Gastrocnemius medialis (tissue), 4 donors: ENCODE measurements at regions of chr2 and their contacts with region 1.

Region 1: GRCh38 chr2:24721470-24721869 is 71.7 kb downstream of the PTRHD1 start:
- DNase-seq: peak; percentile 79 to 84
- ATAC-seq: peak; percentile 94 to 95
- H3K4me3 ChIP-seq: no peak overlapping the region
- H3K27ac ChIP-seq: peak overlapping the region; percentile 64 to 79 (median 75)
- H3K4me1 ChIP-seq: peaks cover 36 to 56% of the 10 kb centered on the region in 2 donors
- H3K27me3 ChIP-seq: no peaks in the 10 kb centered on the region
- CTCF ChIP-seq: no peak
- POLR2A ChIP-seq: no peak

Region 2: GRCh38 chr2:24658531-24659202 is 62.8 kb before region 1 on chr2:
- in situ Hi-C with region 1: no loop called
- intact Hi-C with region 1: loop called (anchors 2 kb)
- DNase-seq: peak; percentile 86 to 89
- ATAC-seq: peak; percentile 94 to 96
- H3K4me3 ChIP-seq: peak overlapping the region in 3 of 4 donors; percentile 7 to 24 (median 13)
- H3K27ac ChIP-seq: peak overlapping the region; percentile 85 to 89 (median 87)
- H3K4me1 ChIP-seq: peaks cover 31 to 60% of the 10 kb centered on the region in 2 donors
- H3K27me3 ChIP-seq: no peaks in the 10 kb centered on the region
- CTCF ChIP-seq: no peak
- POLR2A ChIP-seq: peak in 1 of 2 donors; percentile 9

Region 3: DNA sequence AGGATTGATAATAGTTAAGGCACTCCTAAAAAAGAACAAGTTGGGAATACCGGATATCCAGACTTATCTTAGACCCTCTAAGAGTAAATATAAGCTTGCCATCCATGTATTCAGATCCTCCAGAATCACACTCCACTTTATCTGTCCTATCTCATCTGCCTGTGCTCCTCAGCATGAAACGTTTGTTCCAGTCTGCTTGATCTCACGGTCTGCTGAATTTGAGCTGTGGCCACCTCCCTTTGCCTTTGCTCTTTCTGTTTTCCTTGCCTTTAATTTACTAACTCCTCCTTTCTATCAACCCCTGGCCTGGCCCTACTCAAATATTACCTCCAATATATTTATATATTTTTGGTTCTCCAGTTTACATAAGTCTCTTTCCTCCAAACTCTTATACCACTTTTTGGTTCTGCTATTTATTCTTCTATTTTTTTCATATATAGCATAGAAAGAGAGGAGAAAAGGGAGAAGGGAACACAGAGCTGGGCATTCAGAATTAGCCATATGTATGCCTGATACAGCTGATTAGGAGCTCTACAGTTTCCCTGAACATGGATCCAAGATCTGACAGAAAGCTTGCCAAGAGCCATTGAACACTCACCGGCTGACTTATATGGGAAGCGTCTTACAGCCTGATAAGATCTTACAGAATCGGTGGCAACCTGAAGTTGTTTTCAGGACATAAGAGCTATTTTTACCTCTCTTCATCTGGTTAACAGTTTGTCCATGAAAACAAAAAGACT is 272.1 kb after region 1 on chr2:
- in situ Hi-C with region 1: no loop called
- intact Hi-C with region 1: no loop called
- DNase-seq: no peak
- ATAC-seq: no peak
- H3K4me3 ChIP-seq: no peak overlapping the region
- H3K27ac ChIP-seq: no peak overlapping the region
- H3K4me1 ChIP-seq: peaks cover 14 to 17% of the 10 kb centered on the region in 2 donors
- H3K27me3 ChIP-seq: no peaks in the 10 kb centered on the region
- CTCF ChIP-seq: no peak
- POLR2A ChIP-seq: no peak

Region 4: GRCh38 chr2:25204190-25204838 is 482.8 kb after region 1 on chr2:
- in situ Hi-C with region 1: no loop called
- intact Hi-C with region 1: no loop called
- DNase-seq: no peak
- ATAC-seq: no peak
- H3K4me3 ChIP-seq: peak overlapping the region in 1 of 4 donors; percentile 24
- H3K27ac ChIP-seq: no peak overlapping the region
- H3K4me1 ChIP-seq: no peaks in the 10 kb centered on the region
- H3K27me3 ChIP-seq: no peaks in the 10 kb centered on the region
- CTCF ChIP-seq: no peak
- POLR2A ChIP-seq: no peak